Dendritic cell treated with granulocyte-macrophage colony-stimulating factor and Interleukin-4, amounts not matched to agents 40 ng/mL and 50 ng/mL, for 4 days (primary cell): ENCODE measurements at regions of chr5 and their contacts with region 1.

Region 1: GRCh38 chr5:177425801-177426565 is 493 bp upstream of the GRK6 start:
- H3K4me3 Mint-ChIP-seq: peak overlapping the region; percentile 86
- H3K27ac Mint-ChIP-seq: peak overlapping the region; percentile 96
- H3K4me1 Mint-ChIP-seq: peaks cover 54% of the 10 kb centered on the region
- H3K27me3 Mint-ChIP-seq: no peaks in the 10 kb centered on the region

Region 2: GRCh38 chr5:177412603-177413233 is 13.3 kb before region 1 on chr5:
- intact Hi-C with region 1: loop called (anchors 1 kb)
- H3K4me3 Mint-ChIP-seq: no peak overlapping the region
- H3K27ac Mint-ChIP-seq: no peak overlapping the region
- H3K4me1 Mint-ChIP-seq: peaks cover 50% of the 10 kb centered on the region
- H3K27me3 Mint-ChIP-seq: peaks cover 8% of the 10 kb centered on the region